Left colon (tissue), 2 donors: ENCODE measurements at regions of chr3 and their contacts with region 1.

Region 1: DNA sequence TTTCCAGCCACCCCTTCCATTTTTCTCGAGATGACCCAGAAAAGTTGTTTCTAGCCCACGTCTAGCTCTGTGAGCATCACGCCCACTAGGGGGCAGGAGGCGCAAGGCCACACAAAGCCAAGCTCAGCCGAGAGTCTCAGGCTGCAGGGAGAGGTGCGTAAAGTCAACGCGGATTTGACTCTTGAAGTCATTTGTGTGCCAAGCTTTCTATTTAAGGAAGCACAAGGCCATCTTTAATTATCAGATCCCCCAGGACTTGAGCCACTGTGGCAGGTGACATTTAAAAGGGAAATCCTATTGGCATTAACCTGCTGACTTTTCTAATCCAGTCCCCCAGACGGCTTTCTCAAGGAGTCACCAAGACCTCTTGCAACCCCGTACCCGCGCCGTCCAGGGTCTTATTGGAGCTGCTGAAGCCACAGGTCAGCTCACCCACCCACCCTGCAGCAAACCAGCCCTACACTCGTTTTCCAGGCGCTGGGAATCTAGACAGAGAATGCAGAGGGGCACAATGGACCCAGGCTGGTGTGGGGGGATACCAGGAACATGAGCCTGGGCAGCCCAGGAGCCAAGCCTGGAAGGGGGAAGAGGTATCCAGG is 62.1 kb downstream of the CAPN7 start:
- DNase-seq: peak; percentile 76 to 92
- ATAC-seq: peak; percentile 82

Region 2: DNA sequence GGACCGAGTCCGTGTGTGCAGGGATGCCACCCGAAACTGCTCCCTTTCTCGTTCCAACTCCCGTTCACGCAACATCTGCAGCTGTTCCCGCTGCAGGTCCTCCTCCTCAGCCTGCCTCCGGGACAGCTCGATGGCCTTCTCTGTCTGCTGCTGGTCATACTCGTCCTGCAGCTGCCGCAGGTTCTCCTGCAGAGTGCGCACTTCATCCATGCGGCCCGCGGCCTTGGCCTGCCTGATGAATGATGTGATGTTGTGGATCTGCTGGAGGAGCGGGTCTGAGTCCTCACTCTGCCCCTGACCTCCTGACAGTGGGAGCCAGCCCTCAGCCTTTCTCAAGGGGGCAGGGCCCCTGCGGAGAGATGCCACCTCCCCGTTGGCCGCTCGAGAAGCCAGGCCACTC is 193.6 kb before region 1 on chr3:
- intact Hi-C with region 1: no loop called
- DNase-seq: no peak
- ATAC-seq: no peak

Region 3: GRCh38 chr3:15377961-15378791 is 110.0 kb after region 1 on chr3:
- intact Hi-C with region 1: loop called in 1 of 2 experiments (anchors 5 kb)
- DNase-seq: peak; percentile 95 to 96
- ATAC-seq: peak; percentile 91